Activated CD8-positive, alpha-beta T cell treated with anti-CD3 and anti-CD28 coated beads, Interleukin-2, amount 10 ng/mL, durations not matched to agents 7 days and 5 days (primary cell): ENCODE measurements at regions of chr19 and their contacts with region 1.

Region 1: GRCh38 chr19:51338563-51339312 is 3.2 kb downstream of the VSIG10L start:
- DNase-seq: peak; percentile 92
- ATAC-seq: peak; percentile 81
- H3K4me3 Mint-ChIP-seq: peak overlapping the region; percentile 86
- H3K27ac Mint-ChIP-seq: peak overlapping the region; percentile 78
- H3K4me1 Mint-ChIP-seq: peaks cover 20% of the 10 kb centered on the region
- H3K27me3 Mint-ChIP-seq: peaks cover 6% of the 10 kb centered on the region

Region 2: DNA sequence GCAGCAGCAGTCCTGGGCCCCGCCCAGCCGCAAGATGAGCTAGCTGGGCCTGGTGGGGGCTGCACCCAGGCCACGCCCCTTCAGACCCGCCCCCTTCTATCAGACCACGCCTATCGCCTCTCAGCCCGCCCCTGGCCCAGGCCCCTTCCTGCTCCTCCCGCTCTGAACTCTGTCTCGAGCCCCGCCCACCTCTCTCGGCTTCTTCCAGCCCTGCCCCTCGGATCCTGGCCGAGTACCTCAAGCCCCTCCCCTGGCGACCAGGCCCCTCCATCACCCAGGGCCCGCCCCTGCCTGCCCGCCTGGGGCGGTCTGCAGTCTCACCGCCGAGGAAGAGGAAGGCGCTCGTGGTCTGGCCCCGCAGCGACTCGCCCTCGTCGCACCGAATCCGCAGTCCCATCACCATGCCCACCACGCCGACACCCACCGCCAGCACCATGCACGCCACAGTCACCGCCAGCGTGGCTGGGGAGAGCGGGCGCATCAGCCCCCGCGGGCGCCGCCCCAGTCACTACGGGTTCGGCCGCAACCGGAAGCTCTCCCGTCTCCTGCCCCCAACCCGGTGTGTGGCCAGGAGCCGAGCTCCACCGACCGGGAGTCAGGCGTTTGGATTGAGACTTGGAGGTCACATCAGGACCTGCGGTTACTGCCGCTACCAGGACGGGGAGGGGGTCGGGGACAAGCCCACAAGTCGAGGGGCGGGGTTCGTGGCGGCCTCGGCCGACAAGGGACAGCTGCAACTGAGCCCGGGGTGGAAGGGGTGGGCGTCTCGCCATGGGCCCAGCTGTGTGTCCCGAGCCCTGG is 29.0 kb after region 1 on chr19:
- CTCF ChIA-PET with region 1: interaction called, 27 read pairs
- POLR2A ChIA-PET with region 1: interaction called, 12 read pairs
- DNase-seq: peak; percentile 99
- ATAC-seq: peak; percentile 75
- H3K4me3 Mint-ChIP-seq: peak overlapping the region; percentile 96
- H3K27ac Mint-ChIP-seq: peak overlapping the region; percentile 94
- H3K4me1 Mint-ChIP-seq: peaks cover 77% of the 10 kb centered on the region
- H3K27me3 Mint-ChIP-seq: no peaks in the 10 kb centered on the region

Region 3: DNA sequence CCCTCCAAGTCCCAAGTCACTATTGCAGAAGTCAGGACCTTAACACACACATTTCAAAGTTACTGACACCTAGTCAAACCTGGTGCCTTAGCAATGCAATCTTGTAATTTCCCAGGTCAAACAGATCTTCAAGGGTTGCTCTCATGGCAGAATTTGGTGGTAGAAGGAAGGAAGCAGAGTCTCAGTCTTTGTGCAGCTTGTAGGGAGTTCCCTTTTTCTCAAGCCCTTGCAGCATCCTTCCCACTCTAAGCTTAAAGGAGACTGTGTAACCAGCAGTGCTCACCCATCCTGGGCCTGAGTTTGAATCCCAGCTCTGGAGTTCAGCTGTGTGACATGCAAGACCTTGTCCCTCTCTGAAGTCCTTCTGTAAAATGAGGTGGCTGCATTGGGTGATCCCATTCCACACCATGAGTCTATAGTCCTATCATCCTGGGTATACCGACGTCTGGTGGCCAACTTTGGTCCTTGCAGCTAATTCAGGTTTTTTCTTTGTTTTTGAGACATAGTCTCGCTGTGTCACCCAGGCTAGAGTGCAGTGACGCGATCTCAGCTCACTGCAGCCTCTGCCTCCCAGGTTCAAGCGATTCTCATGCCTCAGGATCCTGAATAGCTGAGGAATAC is 68.9 kb after region 1 on chr19:
- CTCF ChIA-PET with region 1: interaction called, 13 read pairs
- POLR2A ChIA-PET with region 1: no interaction called
- DNase-seq: peak; percentile 53
- ATAC-seq: peak; percentile 75
- H3K4me3 Mint-ChIP-seq: no peak overlapping the region
- H3K27ac Mint-ChIP-seq: no peak overlapping the region
- H3K4me1 Mint-ChIP-seq: peaks cover 8% of the 10 kb centered on the region
- H3K27me3 Mint-ChIP-seq: peaks cover 3% of the 10 kb centered on the region

Region 4: DNA sequence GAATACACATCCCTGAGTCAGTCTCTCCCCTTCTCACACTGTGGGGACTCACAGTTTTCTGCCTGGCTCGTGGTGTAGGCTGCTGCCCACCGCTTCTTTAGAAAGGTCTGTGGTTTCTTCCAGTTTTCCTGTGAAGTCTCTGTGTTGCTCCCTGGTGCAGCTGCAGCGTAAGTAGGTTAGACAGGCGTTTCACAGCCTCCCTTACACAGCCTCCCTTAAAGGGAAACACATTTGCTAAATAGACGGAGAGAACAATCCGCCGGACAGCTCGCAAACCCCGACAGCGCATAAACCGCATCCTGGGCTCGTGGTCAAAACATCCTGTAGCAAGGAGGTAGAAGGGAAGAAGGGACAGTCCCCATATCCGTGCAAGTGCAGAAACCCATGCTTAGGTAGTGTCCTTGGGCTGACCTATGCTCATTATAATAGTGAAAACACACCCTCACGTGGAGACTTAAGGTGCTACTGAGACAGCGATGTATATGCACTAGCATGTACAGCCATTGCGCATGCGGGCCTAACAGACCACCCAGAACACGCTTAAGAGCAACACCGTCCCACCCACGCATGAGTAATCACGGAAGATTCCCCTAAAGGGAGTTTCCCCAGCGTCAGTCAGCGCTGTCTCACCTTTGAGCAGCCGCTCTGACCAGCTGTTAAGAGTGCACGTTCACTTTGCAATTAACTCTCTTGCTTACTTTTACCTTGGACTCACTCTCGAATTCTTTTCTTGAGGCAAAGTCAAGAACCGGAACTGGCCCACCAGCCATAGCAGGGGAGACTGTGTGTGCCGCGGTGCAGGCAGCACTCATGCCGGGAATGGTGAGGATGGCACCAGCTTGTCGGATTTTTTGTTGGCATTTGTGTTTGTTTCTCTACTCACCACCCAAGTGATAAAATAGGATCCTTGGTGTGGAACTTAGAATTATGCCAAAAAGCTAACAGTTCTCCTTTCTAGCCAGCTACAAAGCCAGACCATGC is 103.0 kb after region 1 on chr19:
- CTCF ChIA-PET with region 1: interaction called, 38 read pairs
- POLR2A ChIA-PET with region 1: interaction called, 3 read pairs
- DNase-seq: peak; percentile 97
- ATAC-seq: peak; percentile 92
- H3K4me3 Mint-ChIP-seq: peak overlapping the region; percentile 71
- H3K27ac Mint-ChIP-seq: peak overlapping the region; percentile 74
- H3K4me1 Mint-ChIP-seq: peaks cover 49% of the 10 kb centered on the region
- H3K27me3 Mint-ChIP-seq: peaks cover 38% of the 10 kb centered on the region